Transverse colon (tissue), 4 donors: ENCODE measurements at regions of chr7 and their contacts with region 1.

Region 1: DNA sequence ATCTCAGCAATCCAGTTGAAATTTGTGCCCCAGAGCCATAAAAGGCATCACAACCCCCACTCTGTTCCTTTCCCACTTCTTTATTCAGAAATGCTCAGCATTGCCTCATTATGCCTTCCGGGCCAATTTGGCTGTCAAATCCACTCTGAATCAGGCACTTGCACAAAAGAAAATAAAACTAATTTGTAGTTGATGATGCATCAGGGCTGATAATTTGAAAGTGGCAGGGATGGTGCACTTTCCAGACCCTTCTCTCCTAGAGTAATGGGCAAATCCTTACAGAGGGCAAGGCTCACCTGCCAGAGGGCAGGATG is 147.9 kb upstream of the PDE1C start:
- DNase-seq: no peak
- H3K4me3 ChIP-seq: no peak overlapping the region
- H3K27ac ChIP-seq: no peak overlapping the region
- H3K4me1 ChIP-seq: no peaks in the 10 kb centered on the region
- H3K27me3 ChIP-seq: no peaks in the 10 kb centered on the region
- CTCF ChIP-seq: no peak
- EP300 ChIP-seq: no peak
- POLR2A ChIP-seq: no peak

Region 2: GRCh38 chr7:31776616-31777015 is 441.5 kb before region 1 on chr7:
- in situ Hi-C with region 1: no loop called
- intact Hi-C with region 1: no loop called
- DNase-seq: no peak
- H3K4me3 ChIP-seq: no peak overlapping the region
- H3K27ac ChIP-seq: no peak overlapping the region
- H3K4me1 ChIP-seq: no peaks in the 10 kb centered on the region
- H3K27me3 ChIP-seq: no peaks in the 10 kb centered on the region
- CTCF ChIP-seq: no peak
- EP300 ChIP-seq: no peak
- POLR2A ChIP-seq: no peak

Region 3: GRCh38 chr7:32102432-32102873 is 115.7 kb before region 1 on chr7:
- in situ Hi-C with region 1: no loop called
- intact Hi-C with region 1: no loop called
- DNase-seq: no peak
- H3K4me3 ChIP-seq: no peak overlapping the region
- H3K27ac ChIP-seq: no peak overlapping the region
- H3K4me1 ChIP-seq: no peaks in the 10 kb centered on the region
- H3K27me3 ChIP-seq: no peaks in the 10 kb centered on the region
- CTCF ChIP-seq: no peak
- EP300 ChIP-seq: no peak
- POLR2A ChIP-seq: no peak

Region 4: DNA sequence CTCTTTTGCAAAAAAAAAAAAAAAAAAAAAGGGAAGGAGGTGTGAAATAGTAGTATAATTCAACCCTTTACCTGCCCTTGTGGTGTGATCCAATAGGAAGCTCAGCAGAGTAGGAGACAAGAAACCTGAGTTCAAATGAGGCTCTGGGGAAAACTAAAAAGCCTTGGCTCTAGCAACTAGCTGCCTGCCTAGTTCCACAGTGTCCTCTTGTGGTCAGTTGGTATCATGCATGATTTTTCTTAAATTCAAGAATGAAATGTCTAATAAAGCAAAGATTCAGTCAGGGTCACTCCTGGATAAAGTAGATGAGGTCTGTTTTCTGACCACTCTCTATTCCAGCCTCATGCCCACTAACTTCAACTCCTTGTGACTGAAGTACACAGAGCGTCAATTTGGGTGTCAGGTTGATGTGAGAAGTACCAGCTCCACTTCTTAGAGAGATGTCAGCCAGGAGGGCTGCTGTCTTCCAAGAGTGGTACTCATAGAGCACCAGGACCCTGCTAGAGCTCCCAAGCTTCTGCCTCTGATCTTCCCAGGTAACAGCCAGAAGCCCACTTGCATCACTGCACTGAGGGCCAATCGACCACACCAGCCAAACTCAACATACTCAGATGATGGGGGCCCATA is 261.6 kb after region 1 on chr7:
- in situ Hi-C with region 1: loop called in 1 of 4 experiments (anchors 10 kb)
- intact Hi-C with region 1: no loop called
- DNase-seq: no peak
- H3K4me3 ChIP-seq: no peak overlapping the region
- H3K27ac ChIP-seq: no peak overlapping the region
- H3K4me1 ChIP-seq: no peaks in the 10 kb centered on the region
- H3K27me3 ChIP-seq: no peaks in the 10 kb centered on the region
- CTCF ChIP-seq: peak; percentile 45 to 72 (median 66)
- EP300 ChIP-seq: no peak
- POLR2A ChIP-seq: no peak